Activated CD8-positive, alpha-beta T cell treated with anti-CD3 and anti-CD28 coated beads, Interleukin-2, amount 10 ng/mL, durations not matched to agents 7 days and 5 days (primary cell): ENCODE measurements at regions of chr17 and their contacts with region 1.

Region 1: GRCh38 chr17:75109407-75110233 is at the start of gene ARMC7:
- DNase-seq: peak; percentile 92
- ATAC-seq: peak; percentile 86
- H3K4me3 Mint-ChIP-seq: peak within 1 kb of the TSS; percentile 92
- H3K27ac Mint-ChIP-seq: peak within 1 kb of the TSS; percentile 87
- H3K4me1 Mint-ChIP-seq: peaks cover 48% of the 10 kb centered on the region
- H3K27me3 Mint-ChIP-seq: no peaks in the 10 kb centered on the region
- total RNA-seq, gene ARMC7: 16.1 to 17.0 TPM

Region 2: DNA sequence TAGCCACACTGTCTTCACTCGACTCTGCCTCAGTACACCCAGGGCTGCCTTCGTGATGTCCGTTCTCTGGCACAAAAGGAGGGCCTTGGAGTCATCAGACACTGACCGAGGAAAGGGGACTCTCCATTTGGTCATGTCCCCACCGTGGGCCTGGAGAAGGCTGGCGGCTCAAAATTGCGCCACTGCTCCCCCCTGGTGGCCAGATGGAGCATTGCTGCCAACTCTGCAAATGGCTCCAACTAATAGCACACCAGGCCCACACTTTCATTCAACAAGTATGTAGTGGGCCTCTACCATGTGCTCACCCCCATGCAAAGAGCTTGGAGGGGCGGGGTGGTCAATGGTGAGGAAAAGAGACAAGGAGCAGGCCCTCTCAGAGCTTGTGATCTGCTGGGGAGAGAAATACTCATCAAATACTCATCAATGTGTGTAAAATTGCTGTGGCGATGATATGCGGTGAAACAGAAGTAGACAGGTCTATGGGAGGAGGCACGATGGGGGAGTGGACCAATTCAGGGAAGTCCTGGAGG is 244.7 kb before region 1 on chr17:
- CTCF ChIA-PET with region 1: no interaction called
- POLR2A ChIA-PET with region 1: no interaction called
- DNase-seq: peak; percentile 80
- ATAC-seq: peak; percentile 60
- H3K4me3 Mint-ChIP-seq: no peak overlapping the region
- H3K27ac Mint-ChIP-seq: no peak overlapping the region
- H3K4me1 Mint-ChIP-seq: peaks cover 23% of the 10 kb centered on the region
- H3K27me3 Mint-ChIP-seq: peaks cover 18% of the 10 kb centered on the region

Region 3: DNA sequence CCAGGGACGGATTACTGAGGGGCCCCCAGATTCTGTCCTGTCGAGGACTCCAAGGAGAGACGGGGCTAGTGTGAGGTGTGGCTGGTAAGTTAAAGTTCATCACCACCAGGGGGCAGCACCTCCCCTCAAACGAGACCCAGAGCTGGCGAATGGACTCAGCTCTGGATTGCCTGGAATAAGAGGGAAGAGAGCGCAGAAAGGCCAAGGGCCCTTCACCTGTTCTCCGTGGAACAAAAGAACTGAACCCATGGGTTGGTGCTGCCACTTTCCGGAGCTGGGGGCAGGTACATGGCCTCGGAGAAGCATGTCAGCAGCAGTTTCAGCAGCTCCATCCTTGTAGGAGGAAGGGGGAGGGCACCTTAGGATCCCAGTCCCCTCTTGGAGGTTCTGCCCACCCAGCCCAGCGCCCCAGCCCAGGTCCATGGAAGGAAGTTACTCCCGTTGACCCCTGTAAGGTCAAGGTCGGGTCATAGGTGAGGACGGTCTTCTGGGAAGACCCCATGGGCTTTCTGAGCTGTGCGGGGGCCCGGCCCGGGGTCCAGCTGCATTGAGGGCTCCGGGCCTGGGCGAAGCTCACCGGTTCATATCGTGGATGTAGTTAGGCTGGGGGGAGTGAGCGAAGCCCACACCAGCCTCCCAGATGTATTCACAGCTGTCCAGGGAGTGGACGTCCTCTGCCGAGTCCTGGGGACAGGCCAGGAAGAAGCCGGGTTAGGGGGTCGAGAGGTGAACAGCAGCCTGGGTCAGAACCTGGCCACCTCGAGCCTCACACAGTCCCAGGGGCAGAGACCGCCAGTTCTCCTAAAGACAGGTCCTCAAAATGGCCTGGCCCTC is 147.7 kb before region 1 on chr17:
- CTCF ChIA-PET with region 1: interaction called, 28 read pairs
- POLR2A ChIA-PET with region 1: interaction called, 4 read pairs
- DNase-seq: peak; percentile 89
- ATAC-seq: peak; percentile 78
- H3K4me3 Mint-ChIP-seq: no peak overlapping the region
- H3K27ac Mint-ChIP-seq: no peak overlapping the region
- H3K4me1 Mint-ChIP-seq: peaks cover 10% of the 10 kb centered on the region
- H3K27me3 Mint-ChIP-seq: peaks cover 2% of the 10 kb centered on the region

Region 4: DNA sequence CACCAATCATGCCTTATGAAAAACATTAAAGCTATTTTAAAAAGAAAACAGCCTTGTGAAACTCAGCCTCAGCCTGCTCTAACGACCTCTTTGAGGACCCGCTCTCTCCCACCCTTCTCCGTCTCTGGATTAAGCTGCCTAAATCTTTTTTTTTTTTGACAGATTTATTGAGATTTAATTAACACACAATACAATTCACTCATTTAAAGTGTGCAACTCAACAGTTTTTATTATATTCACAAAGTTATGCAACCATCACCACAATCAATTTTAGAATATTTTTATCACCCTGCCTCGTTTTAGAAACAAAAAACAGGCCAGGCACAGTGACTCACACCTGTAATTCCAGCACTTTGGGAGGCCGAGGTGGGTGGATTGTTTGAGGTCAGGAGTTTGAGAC is 113.8 kb before region 1 on chr17:
- CTCF ChIA-PET with region 1: no interaction called
- POLR2A ChIA-PET with region 1: no interaction called
- DNase-seq: no peak
- ATAC-seq: no peak
- H3K4me3 Mint-ChIP-seq: no peak overlapping the region
- H3K27ac Mint-ChIP-seq: no peak overlapping the region
- H3K4me1 Mint-ChIP-seq: peaks cover 10% of the 10 kb centered on the region
- H3K27me3 Mint-ChIP-seq: peaks cover 14% of the 10 kb centered on the region

Region 5: DNA sequence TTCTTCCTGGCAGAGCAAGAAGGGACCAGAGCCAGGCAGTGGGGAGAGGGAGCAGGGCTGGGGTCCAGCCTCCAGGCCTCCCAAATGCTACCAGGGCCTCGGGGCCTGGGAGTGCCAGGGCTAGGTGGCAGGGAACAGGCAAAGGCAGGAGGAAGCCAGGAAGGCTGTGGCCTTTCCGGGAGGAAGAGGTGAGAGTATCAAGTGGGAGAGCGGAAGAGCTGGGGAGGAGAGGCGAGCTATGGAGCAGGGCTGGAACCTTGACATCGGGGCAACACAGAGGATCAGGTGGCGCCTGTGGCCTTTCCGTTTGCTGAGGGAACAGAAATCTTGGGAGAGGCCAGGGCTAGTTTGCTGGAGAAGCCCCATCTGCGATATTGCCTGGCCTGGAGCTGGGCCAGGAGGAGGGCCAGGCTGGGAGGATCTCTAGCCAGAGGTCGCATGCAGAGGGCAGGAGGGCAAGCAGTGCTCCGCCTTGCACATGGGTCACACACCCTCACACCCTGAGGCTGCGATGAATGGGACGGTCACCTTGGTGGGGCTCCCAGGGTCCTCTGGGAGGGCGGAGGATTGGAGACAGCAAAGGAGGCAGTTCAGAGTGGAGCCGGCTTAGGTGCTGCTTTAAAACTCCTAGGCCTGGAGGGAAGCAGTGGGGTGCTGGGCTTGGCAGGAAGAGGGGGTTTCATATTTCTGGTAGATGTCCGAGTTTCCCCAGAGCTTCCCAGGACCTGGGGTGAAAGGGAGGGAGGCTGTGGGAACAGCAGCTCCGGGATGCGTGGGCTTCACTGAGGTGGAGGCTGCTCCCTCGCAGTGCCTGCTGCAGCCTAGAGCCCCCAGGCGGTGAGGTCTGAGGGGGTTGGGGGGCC is 18.4 kb before region 1 on chr17:
- CTCF ChIA-PET with region 1: interaction called, 14 read pairs
- POLR2A ChIA-PET with region 1: interaction called, 9 read pairs
- DNase-seq: no peak
- ATAC-seq: no peak
- H3K4me3 Mint-ChIP-seq: no peak overlapping the region
- H3K27ac Mint-ChIP-seq: no peak overlapping the region
- H3K4me1 Mint-ChIP-seq: peaks cover 31% of the 10 kb centered on the region
- H3K27me3 Mint-ChIP-seq: no peaks in the 10 kb centered on the region

Region 6: GRCh38 chr17:75147878-75148546 is 38.4 kb after region 1 on chr17:
- CTCF ChIA-PET with region 1: interaction called, 12 read pairs
- POLR2A ChIA-PET with region 1: no interaction called
- DNase-seq: no peak
- ATAC-seq: no peak
- H3K4me3 Mint-ChIP-seq: no peak overlapping the region
- H3K27ac Mint-ChIP-seq: peak overlapping the region; percentile 9
- H3K4me1 Mint-ChIP-seq: peaks cover 29% of the 10 kb centered on the region
- H3K27me3 Mint-ChIP-seq: no peaks in the 10 kb centered on the region

Region 7: DNA sequence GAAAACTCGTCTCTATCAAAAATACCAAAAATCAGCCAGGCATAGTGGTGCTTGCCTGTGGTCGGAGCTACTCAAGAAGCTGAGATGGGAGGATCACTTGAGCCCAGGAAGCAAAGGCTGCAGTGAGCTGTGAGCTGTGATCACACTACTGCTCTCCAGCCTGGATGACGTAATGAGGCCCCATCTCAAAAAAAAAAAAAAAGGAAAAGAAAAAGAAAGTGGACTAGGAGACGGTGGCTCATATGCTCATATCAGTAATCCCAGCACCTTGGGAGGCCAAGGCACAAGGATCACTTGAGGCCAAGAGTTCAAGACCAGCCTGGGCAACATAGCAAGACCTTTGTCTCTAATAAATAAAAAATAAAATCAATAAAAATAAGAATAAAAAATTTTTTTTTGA is 82.0 kb after region 1 on chr17:
- CTCF ChIA-PET with region 1: interaction called, 13 read pairs
- POLR2A ChIA-PET with region 1: interaction called, 4 read pairs
- DNase-seq: no peak
- ATAC-seq: no peak
- H3K4me3 Mint-ChIP-seq: no peak overlapping the region
- H3K27ac Mint-ChIP-seq: no peak overlapping the region
- H3K4me1 Mint-ChIP-seq: peaks cover 17% of the 10 kb centered on the region
- H3K27me3 Mint-ChIP-seq: no peaks in the 10 kb centered on the region

Region 8: DNA sequence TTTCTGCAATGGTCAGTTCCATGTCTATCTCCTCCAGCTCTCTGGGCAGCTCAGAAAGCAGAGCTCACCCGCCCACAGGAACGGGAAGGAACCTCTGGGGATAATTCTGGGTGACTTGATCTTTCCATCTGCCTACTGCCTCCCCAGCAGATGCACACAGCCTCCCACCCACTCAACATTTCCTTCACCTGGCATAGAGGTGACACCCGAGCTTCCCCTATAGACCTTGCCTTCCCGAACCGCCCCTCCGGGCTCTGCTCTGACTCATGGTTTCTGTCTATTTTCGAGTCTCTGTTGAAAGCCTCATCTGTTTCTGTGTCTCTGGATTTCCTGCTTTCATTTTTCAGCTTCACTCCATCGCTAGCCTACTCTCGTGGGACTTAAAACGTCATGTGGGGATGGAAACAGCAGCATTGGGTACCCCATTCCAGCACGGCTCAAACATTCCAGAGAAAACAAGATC is 140.4 kb after region 1 on chr17:
- CTCF ChIA-PET with region 1: interaction called, 11 read pairs
- POLR2A ChIA-PET with region 1: interaction called, 4 read pairs
- DNase-seq: peak; percentile 75
- ATAC-seq: peak; percentile 94
- H3K4me3 Mint-ChIP-seq: peak overlapping the region; percentile 60
- H3K27ac Mint-ChIP-seq: peak overlapping the region; percentile 86
- H3K4me1 Mint-ChIP-seq: peaks cover 25% of the 10 kb centered on the region
- H3K27me3 Mint-ChIP-seq: no peaks in the 10 kb centered on the region

Region 9: GRCh38 chr17:75319904-75320691 is 210.5 kb after region 1 on chr17:
- CTCF ChIA-PET with region 1: no interaction called
- POLR2A ChIA-PET with region 1: no interaction called
- DNase-seq: no peak
- ATAC-seq: no peak
- H3K4me3 Mint-ChIP-seq: no peak overlapping the region
- H3K27ac Mint-ChIP-seq: peak overlapping the region; percentile 57
- H3K4me1 Mint-ChIP-seq: peaks cover 28% of the 10 kb centered on the region
- H3K27me3 Mint-ChIP-seq: no peaks in the 10 kb centered on the region

Region 10: DNA sequence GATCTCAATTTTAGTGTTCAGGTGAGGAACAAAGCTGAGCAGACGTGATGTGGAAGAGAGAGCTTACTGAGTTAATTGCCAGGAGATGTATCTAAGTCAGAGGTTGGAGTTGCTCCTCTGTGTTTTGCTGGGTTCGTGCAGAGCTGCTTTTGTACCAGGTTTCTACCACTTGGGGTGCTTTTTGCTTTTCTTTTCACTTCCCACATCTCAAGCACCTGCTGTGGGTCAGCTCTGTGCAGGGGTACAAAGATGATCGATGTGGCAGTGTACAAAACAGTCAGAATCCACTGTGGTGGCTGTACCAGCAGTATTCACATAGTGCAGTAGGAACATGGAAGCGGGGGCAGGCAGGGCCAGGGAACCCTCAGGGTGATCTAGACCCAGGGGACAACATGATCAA is 689.8 kb after region 1 on chr17:
- CTCF ChIA-PET with region 1: no interaction called
- POLR2A ChIA-PET with region 1: no interaction called
- DNase-seq: no peak
- ATAC-seq: no peak
- H3K4me3 Mint-ChIP-seq: no peak overlapping the region
- H3K27ac Mint-ChIP-seq: no peak overlapping the region
- H3K4me1 Mint-ChIP-seq: peaks cover 25% of the 10 kb centered on the region
- H3K27me3 Mint-ChIP-seq: no peaks in the 10 kb centered on the region